ENCODE measurements at regions of chr5 and their contacts with region 1.

Region 1: GRCh38 chr5:60677844-60678664 is 21.9 kb downstream of the DEPDC1B start:
- DNase-seq: peak; percentile 64
- ATAC-seq: peak; percentile 81
- H3K4me3 ChIP-seq: peak overlapping the region in 1 of 3 experiments; percentile 17; a peak in 1 of 6 replicates
- H3K27ac ChIP-seq: peak overlapping the region; percentile 57
- H3K4me1 ChIP-seq: peaks cover 65% of the 10 kb centered on the region
- H3K27me3 ChIP-seq: no peaks in the 10 kb centered on the region
- CTCF ChIP-seq: peak; percentile 46
- EP300 ChIP-seq: peak in 1 of 2 experiments; percentile 41; a peak in 1 of 4 replicates
- POLR2A ChIP-seq: no peak
- RAD21 ChIP-seq: 0 out of 2 replicates have a peak, but pooled peaks have one; percentile 17

Region 2: DNA sequence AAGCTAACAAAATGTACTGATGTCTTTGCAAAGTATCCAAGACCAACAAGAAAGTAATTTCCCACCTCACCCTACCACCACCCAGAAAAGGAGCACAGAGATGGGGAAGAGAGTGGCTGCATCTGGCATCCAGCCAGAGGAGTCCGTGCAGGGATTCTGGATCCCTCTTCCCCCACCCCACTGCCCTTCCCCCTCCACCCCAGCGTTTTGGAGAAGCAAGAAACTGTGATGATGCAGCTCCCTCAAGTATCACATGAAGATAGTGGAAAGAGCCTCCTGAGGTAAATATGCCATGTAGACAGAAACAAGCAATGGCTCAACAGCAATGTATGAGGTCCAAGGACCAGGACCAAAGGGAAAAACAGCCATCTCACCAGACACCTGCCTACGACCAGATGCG is 131.9 kb before region 1 on chr5:
- CTCF ChIA-PET with region 1: no interaction called
- POLR2A ChIA-PET with region 1: no interaction called
- in situ Hi-C with region 1: no loop called
- intact Hi-C with region 1: no loop called
- DNase-seq: no peak
- ATAC-seq: no peak
- H3K4me3 ChIP-seq: no peak overlapping the region
- H3K27ac ChIP-seq: no peak overlapping the region
- H3K4me1 ChIP-seq: peaks cover 18% of the 10 kb centered on the region
- H3K27me3 ChIP-seq: no peaks in the 10 kb centered on the region
- CTCF ChIP-seq: no peak
- EP300 ChIP-seq: no peak
- POLR2A ChIP-seq: no peak
- RAD21 ChIP-seq: no peak

Region 3: GRCh38 chr5:60633341-60633740 is 44.7 kb before region 1 on chr5:
- CTCF ChIA-PET with region 1: no interaction called
- POLR2A ChIA-PET with region 1: no interaction called
- in situ Hi-C with region 1: no loop called
- intact Hi-C with region 1: no loop called
- DNase-seq: no peak
- ATAC-seq: no peak
- H3K4me3 ChIP-seq: no peak overlapping the region
- H3K27ac ChIP-seq: no peak overlapping the region
- H3K4me1 ChIP-seq: no peaks in the 10 kb centered on the region
- H3K27me3 ChIP-seq: no peaks in the 10 kb centered on the region
- CTCF ChIP-seq: no peak
- EP300 ChIP-seq: no peak
- POLR2A ChIP-seq: no peak
- RAD21 ChIP-seq: no peak

Region 4: DNA sequence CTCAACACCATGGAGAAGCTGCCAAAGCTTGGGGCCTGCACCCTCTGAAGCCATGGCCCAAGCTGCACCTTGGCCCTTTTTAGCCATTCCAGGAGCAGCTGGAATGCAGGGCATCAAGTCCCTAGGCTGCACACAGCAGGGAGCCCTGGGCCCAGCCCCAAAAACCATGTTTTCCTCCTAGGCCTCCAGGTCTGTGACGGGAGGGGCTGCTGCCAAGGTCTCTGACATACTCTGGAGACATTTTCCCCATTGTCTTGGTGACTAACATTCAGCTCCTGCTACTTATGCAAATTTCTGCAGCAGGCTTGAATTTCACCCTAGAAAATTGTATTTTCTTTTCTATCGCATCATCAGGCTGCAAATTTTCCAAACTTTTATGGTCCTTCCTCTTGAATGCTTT is 101.4 kb after region 1 on chr5:
- CTCF ChIA-PET with region 1: no interaction called
- POLR2A ChIA-PET with region 1: no interaction called
- in situ Hi-C with region 1: no loop called
- intact Hi-C with region 1: no loop called
- DNase-seq: no peak
- ATAC-seq: no peak
- H3K4me3 ChIP-seq: no peak overlapping the region
- H3K27ac ChIP-seq: no peak overlapping the region
- H3K4me1 ChIP-seq: no peaks in the 10 kb centered on the region
- H3K27me3 ChIP-seq: no peaks in the 10 kb centered on the region
- CTCF ChIP-seq: no peak
- EP300 ChIP-seq: no peak
- POLR2A ChIP-seq: no peak
- RAD21 ChIP-seq: no peak

Region 5: DNA sequence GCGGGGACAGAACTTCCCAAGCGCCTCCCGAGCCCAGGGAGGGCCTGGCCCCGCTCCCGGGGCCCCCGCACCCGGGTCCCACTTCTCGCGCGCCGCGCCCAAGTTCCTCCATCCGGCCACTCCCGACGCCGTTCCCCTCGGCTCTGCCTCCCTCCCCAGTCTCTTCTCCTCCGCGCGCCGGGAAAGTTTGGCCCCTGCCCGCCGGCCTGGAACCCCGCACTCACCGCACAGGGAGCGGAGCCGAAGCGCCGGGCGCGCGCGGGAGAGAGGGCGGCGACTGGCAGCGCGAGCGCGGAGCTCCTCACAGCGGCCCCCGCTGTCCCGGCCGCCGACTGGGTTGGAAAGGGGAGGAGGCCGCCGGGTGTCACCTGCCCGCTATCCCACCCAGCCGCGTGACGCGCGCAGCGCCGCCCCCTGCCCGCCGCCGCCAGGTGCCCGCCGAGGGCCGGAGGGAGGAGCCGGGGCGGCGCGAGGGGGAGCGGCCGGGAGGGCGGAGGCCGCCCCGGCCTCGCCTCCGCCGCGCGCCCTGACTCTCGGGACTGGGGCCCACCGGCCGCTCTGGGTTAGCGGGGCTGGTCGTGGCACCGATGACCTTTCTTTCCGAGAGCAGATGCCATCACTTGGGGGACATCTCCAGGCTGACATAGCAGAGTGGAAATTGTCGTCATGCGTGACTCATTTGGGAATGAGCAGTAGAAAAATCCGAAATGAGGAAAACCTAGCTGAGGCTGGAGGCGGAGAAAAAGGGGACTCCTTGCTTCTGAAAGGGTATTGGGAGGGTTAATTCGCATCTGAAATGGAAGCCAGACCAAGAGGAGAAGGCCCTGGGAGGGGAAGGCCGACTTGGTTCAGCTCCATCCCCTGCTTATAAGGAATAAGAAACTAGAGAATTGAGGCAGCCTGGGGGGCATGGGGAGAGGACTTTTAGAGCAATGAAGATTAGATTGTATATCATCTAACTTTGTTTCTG is 166.2 kb after region 1 on chr5 and contains the start of gene ELOVL7:
- CTCF ChIA-PET with region 1: no interaction called
- POLR2A ChIA-PET with region 1: no interaction called
- in situ Hi-C with region 1: no loop called
- intact Hi-C with region 1: loop called (anchors 5 kb)
- DNase-seq: peak; percentile 59
- ATAC-seq: peak; percentile 97
- H3K4me3 ChIP-seq: peak within 1 kb of the TSS; percentile 85 to 89 (median 87)
- H3K27ac ChIP-seq: no peak within 1 kb of the TSS
- H3K4me1 ChIP-seq: peaks cover 8% of the 10 kb centered on the region
- H3K27me3 ChIP-seq: peaks cover 2 to 13% of the 10 kb centered on the region in 2 experiments
- CTCF ChIP-seq: peak; percentile 69
- EP300 ChIP-seq: no peak
- POLR2A ChIP-seq: peak; percentile 42 to 46; a peak in 2 of 4 replicates
- RAD21 ChIP-seq: peak; percentile 79
- total RNA-seq, gene ELOVL7: 5.1 and 7.3 TPM in 2 replicates

Region 6: GRCh38 chr5:60883229-60883628 is 205.2 kb after region 1 on chr5:
- CTCF ChIA-PET with region 1: interaction called, 11 read pairs
- POLR2A ChIA-PET with region 1: no interaction called
- in situ Hi-C with region 1: loop called (anchors 10 kb)
- intact Hi-C with region 1: loop called (anchors 1 kb)
- DNase-seq: peak; percentile 29
- ATAC-seq: peak; percentile 64
- H3K4me3 ChIP-seq: no peak overlapping the region
- H3K27ac ChIP-seq: no peak overlapping the region
- H3K4me1 ChIP-seq: peaks cover 17% of the 10 kb centered on the region
- H3K27me3 ChIP-seq: no peaks in the 10 kb centered on the region
- CTCF ChIP-seq: peak; percentile 69
- EP300 ChIP-seq: no peak
- POLR2A ChIP-seq: no peak
- RAD21 ChIP-seq: no peak; the same call in 1 of the 2 replicates

Region 7: DNA sequence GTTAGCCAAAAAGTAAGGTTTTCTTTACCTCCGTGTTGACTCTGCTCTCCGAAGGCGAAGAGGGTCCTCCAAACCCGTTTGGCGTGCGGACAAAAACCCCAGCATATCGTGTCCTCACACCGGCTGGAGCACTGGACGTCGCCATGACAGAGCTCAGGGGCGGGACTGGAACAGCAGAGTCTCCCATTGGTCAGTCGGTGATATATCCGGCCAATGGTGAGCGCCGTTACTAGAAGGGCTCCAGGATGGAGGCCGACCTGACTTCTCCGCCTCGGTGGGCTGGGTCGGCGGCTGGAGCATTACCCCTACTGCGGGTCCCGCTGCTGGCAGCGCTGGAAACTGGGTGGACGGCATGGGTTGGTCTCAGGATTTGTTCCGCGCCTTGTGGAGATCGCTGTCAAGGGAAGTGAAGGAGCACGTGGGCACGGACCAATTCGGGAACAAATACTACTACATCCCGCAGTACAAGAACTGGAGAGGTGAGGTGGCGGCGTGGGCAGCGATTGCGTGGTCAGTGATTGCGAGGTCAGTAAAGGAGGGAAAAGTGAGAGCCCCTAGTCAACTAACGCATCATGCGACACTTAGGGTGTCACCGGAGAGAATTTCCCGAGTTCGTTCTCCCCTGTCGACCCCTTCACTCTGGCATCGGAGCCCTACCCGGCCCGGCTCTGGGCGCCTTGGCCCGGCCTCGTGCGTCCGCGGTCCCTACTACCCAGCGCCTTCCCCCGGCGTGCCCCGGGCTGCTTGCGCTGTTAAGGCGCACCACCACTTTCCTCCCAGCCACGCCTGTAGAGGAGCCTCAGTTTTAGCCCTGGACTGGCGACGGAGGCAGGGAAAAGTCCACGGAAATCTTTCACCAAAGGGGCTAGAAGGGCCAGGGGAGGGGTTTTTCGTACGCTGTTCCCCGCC is 267.1 kb after region 1 on chr5 and contains the starts of genes ERCC8 and NDUFAF2:
- CTCF ChIA-PET with region 1: no interaction called
- POLR2A ChIA-PET with region 1: no interaction called
- in situ Hi-C with region 1: loop called (anchors 10 kb)
- intact Hi-C with region 1: loop called (anchors 5 kb)
- DNase-seq: peak; percentile 91
- ATAC-seq: peak; percentile 99
- H3K4me3 ChIP-seq: peak within 1 kb of the TSS; percentile 87 to 96 (median 90)
- H3K27ac ChIP-seq: peak within 1 kb of the TSS; percentile 79
- H3K4me1 ChIP-seq: peaks cover 52% of the 10 kb centered on the region
- H3K27me3 ChIP-seq: no peaks in the 10 kb centered on the region; a peak in 1 of 5 replicates
- CTCF ChIP-seq: 0 out of 2 replicates have a peak, but pooled peaks have one; percentile 3
- EP300 ChIP-seq: no peak
- POLR2A ChIP-seq: peak; percentile 69 to 78
- RAD21 ChIP-seq: no peak
- total RNA-seq, gene ERCC8: 35.2 and 60.1 TPM in 2 replicates
- total RNA-seq, gene NDUFAF2: 78.4 and 111 TPM in 2 replicates

Measured in HepG2 (cell line).